Spleen (tissue), 13 donors: ENCODE measurements at regions of chr12 and their contacts with region 1.

Region 1: DNA sequence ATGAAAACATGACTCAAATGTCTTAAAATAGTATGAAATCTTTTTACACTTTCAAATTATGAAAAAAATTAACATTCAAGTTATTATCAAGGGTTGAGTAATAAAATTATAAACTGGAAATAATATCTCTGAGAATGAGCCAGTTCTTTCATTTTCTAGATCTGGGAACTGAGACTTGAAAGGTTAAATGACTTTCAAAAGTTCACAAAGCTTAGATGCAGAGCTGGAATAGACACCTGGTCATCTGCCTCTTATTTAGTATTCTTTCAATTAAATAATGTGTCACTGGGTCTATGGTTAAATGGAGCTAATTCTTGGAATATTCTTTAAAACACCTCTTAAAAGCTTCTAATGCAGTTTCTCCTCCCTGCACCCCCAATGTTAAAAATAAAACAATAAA is 86.6 kb downstream of the CDK17 start:
- DNase-seq: no peak
- H3K4me3 ChIP-seq: no peak overlapping the region
- H3K27ac ChIP-seq: peak overlapping the region in 1 of 8 donors; percentile 18
- H3K4me1 ChIP-seq: peaks cover 0 to 27% (median 13%) of the 10 kb centered on the region in 6 donors
- H3K27me3 ChIP-seq: no peaks in the 10 kb centered on the region
- CTCF ChIP-seq: no peak
- POLR2A ChIP-seq: no peak

Region 2: GRCh38 chr12:96208801-96209549 is 104.6 kb before region 1 on chr12:
- intact Hi-C with region 1: no loop called
- DNase-seq: peak; percentile 85
- H3K4me3 ChIP-seq: peak overlapping the region in 1 of 8 donors; percentile 24
- H3K27ac ChIP-seq: peak overlapping the region; percentile 47 to 79 (median 69)
- H3K4me1 ChIP-seq: peaks cover 58 to 100% (median 94%) of the 10 kb centered on the region in 6 donors
- H3K27me3 ChIP-seq: no peaks in the 10 kb centered on the region
- CTCF ChIP-seq: peak in 3 of 11 experiments; percentile 16 to 22 (median 19)
- POLR2A ChIP-seq: no peak

Region 3: GRCh38 chr12:96327346-96327745 is 13.7 kb after region 1 on chr12:
- intact Hi-C with region 1: loop called (anchors 2 kb)
- DNase-seq: peak; percentile 73
- H3K4me3 ChIP-seq: no peak overlapping the region
- H3K27ac ChIP-seq: peak overlapping the region in 2 of 8 donors; percentile 1 to 5
- H3K4me1 ChIP-seq: peaks cover 3 to 69% (median 36%) of the 10 kb centered on the region in 6 donors
- H3K27me3 ChIP-seq: no peaks in the 10 kb centered on the region
- CTCF ChIP-seq: no peak
- POLR2A ChIP-seq: no peak